ENCODE measurements at regions of chr16 and their contacts with region 1.

Region 1: GRCh38 chr16:11797166-11797956 is at the start of gene ZC3H7A:
- DNase-seq: peak; percentile 91 to 97 (median 95)
- ATAC-seq: peak; percentile 95
- H3K4me3 ChIP-seq: peak within 1 kb of the TSS; percentile 82
- H3K4me3 Mint-ChIP-seq: peak within 1 kb of the TSS; percentile 90 to 97 (median 94)
- H3K27ac ChIP-seq: peak within 1 kb of the TSS; percentile 97
- H3K27ac Mint-ChIP-seq: peak within 1 kb of the TSS; percentile 93 to 99 (median 98)
- H3K4me1 ChIP-seq: peaks cover 41 to 63% of the 10 kb centered on the region in 2 donors
- H3K4me1 Mint-ChIP-seq: peaks cover 55 to 84% (median 78%) of the 10 kb centered on the region in 7 donors
- H3K27me3 ChIP-seq: no peaks in the 10 kb centered on the region
- H3K27me3 Mint-ChIP-seq: no peaks in the 10 kb centered on the region
- total RNA-seq, gene ZC3H7A: 86.9 to 102 (median 88.6) TPM

Region 2: GRCh38 chr16:11345040-11345862 is 452.1 kb before region 1 on chr16 and contains the start of gene RMI2:
- CTCF ChIA-PET with region 1: no interaction called
- POLR2A ChIA-PET with region 1: no interaction called
- intact Hi-C with region 1: loop called in 1 of 2 experiments (anchors 5 kb)
- DNase-seq: peak; percentile 90 to 98 (median 95)
- ATAC-seq: peak; percentile 99
- H3K4me3 ChIP-seq: peak within 1 kb of the TSS; percentile 44
- H3K4me3 Mint-ChIP-seq: peak within 1 kb of the TSS; percentile 79 to 98 (median 92)
- H3K27ac ChIP-seq: peak within 1 kb of the TSS; percentile 65
- H3K27ac Mint-ChIP-seq: peak within 1 kb of the TSS; percentile 58 to 99 (median 83)
- H3K4me1 ChIP-seq: no peaks in the 10 kb centered on the region
- H3K4me1 Mint-ChIP-seq: peaks cover 10 to 49% (median 24%) of the 10 kb centered on the region in 7 donors
- H3K27me3 ChIP-seq: no peaks in the 10 kb centered on the region
- H3K27me3 Mint-ChIP-seq: no peaks in the 10 kb centered on the region
- total RNA-seq, gene RMI2: 1.8 to 57.0 (median 3.3) TPM

Region 3: GRCh38 chr16:11667824-11668622 is 129.3 kb before region 1 on chr16 and contains the start of gene SNN:
- CTCF ChIA-PET with region 1: no interaction called
- POLR2A ChIA-PET with region 1: interaction called, 4 read pairs
- intact Hi-C with region 1: loop called (anchors 2 to 5 kb)
- DNase-seq: peak; percentile 76 to 91 (median 83)
- ATAC-seq: peak; percentile 89
- H3K4me3 ChIP-seq: peak within 1 kb of the TSS; percentile 77
- H3K4me3 Mint-ChIP-seq: peak within 1 kb of the TSS; percentile 88 to 96 (median 91)
- H3K27ac ChIP-seq: peak within 1 kb of the TSS; percentile 85
- H3K27ac Mint-ChIP-seq: peak within 1 kb of the TSS; percentile 85 to 98 (median 96)
- H3K4me1 ChIP-seq: peaks cover 36 to 80% of the 10 kb centered on the region in 2 donors
- H3K4me1 Mint-ChIP-seq: peaks cover 53 to 87% (median 71%) of the 10 kb centered on the region in 7 donors
- H3K27me3 ChIP-seq: no peaks in the 10 kb centered on the region
- H3K27me3 Mint-ChIP-seq: no peaks in the 10 kb centered on the region
- total RNA-seq, gene SNN: 17.0 to 86.8 (median 34.4) TPM

Region 4: DNA sequence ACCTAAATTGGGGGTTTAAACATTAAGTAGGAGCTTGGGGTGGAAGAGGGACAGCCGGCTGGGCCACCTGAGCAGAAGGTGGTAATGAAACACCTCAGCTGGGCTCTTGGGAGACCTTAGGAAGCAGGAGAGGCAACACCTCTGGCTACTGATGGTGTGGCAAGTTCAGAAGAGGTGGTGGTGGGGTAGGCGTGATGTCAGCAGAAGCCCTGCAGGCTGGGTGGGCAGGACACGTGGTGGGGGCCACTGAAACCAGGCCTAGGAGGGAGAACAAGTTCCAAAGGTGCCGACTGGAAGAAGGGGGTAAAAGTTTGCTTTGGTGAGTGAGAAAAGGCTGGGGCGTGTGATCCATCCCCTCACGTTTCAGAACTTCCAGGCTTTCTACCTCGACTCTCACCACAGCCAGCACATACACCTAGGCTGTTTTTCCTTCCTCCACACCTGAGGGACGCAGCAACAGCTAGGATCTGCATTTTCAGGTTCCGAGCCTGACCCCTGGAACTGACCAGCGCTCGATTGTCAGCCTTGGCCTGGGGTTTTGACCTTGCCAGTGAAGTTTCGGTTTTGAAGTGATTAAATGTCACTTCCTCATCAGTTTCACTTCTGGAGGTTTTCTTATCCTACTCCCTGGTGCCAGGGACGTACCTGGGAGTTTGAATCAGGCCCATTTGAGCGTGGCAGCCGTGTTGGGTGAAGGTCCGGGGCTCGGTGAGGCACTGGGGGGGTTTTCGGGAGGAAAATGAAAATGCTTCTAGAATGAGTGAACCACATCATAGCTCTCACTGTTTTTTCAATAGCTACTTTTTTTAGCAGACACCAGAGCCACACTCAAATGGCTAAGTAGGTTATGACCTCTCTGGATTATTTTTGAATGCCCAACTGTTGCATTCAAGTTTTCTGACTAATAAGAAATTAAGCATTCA is 119.1 kb before region 1 on chr16:
- CTCF ChIA-PET with region 1: no interaction called
- POLR2A ChIA-PET with region 1: no interaction called
- intact Hi-C with region 1: no loop called
- DNase-seq: no peak
- ATAC-seq: no peak
- H3K4me3 ChIP-seq: no peak overlapping the region
- H3K4me3 Mint-ChIP-seq: peak overlapping the region in 3 of 10 donors; percentile 5 to 72 (median 31)
- H3K27ac ChIP-seq: no peak overlapping the region
- H3K27ac Mint-ChIP-seq: peak overlapping the region; percentile 20 to 88 (median 72)
- H3K4me1 ChIP-seq: peaks cover 11 to 30% of the 10 kb centered on the region in 2 donors
- H3K4me1 Mint-ChIP-seq: peaks cover 51 to 80% (median 77%) of the 10 kb centered on the region in 7 donors
- H3K27me3 ChIP-seq: no peaks in the 10 kb centered on the region
- H3K27me3 Mint-ChIP-seq: no peaks in the 10 kb centered on the region

Region 5: GRCh38 chr16:11768849-11769248 is 28.5 kb before region 1 on chr16:
- CTCF ChIA-PET with region 1: interaction called, 4 read pairs
- POLR2A ChIA-PET with region 1: interaction called, 17 read pairs
- intact Hi-C with region 1: loop called in 1 of 2 experiments (anchors 5 kb)
- DNase-seq: no peak
- ATAC-seq: no peak
- H3K4me3 ChIP-seq: no peak overlapping the region
- H3K4me3 Mint-ChIP-seq: peak overlapping the region in 9 of 10 donors; percentile 6 to 43 (median 36)
- H3K27ac ChIP-seq: peak overlapping the region; percentile 22
- H3K27ac Mint-ChIP-seq: peak overlapping the region; percentile 15 to 81 (median 70)
- H3K4me1 ChIP-seq: peaks cover 0 to 10% of the 10 kb centered on the region in 2 donors
- H3K4me1 Mint-ChIP-seq: peaks cover 8 to 23% (median 12%) of the 10 kb centered on the region in 7 donors
- H3K27me3 ChIP-seq: no peaks in the 10 kb centered on the region
- H3K27me3 Mint-ChIP-seq: no peaks in the 10 kb centered on the region

Region 6: DNA sequence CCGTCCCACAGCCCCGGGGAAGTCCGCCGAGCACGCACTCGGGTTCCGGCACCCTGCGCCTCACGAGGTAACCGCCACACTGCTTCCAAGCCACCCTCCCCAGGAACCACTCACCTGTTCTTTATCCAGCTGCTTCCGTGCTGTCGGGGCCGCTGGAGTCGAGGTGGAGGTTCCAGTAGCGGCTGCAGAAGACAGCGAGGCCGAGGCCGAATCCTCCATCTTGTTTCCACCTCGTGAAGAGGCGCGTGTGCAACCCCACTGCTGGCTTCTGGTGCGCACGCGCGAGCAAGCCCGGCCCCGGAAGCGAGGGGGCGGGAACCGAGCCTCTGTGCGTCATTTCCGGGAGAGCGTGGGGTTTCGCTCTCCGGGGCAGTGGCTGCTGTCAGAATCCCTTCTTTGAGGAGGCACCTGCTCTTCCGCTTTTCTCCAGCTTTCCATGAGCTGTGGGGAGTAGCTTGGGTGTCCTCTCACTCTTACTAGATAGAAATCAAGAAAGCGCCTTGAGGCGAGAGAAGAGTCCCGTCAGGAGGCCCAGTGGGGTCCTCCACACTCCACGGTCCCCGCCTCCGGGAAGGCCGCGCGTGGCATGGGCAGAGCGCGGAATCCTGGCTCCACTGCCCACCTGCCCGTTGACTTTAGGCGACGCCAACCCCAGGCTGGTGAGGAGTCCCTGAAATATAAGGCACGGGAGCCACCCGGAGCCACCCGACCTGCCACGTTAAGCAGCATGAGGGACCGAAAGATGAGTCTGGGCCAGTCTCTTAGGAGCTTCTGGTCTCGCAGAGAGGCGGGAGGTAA is 54.1 kb after region 1 on chr16 and contains the start of gene RSL1D1:
- CTCF ChIA-PET with region 1: no interaction called
- POLR2A ChIA-PET with region 1: interaction called, 3 read pairs
- intact Hi-C with region 1: loop called (anchors 1 kb)
- DNase-seq: peak; percentile 90 to 99 (median 96)
- ATAC-seq: peak; percentile 92
- H3K4me3 ChIP-seq: peak within 1 kb of the TSS; percentile 95
- H3K4me3 Mint-ChIP-seq: peak within 1 kb of the TSS; percentile 94 to 99 (median 99)
- H3K27ac ChIP-seq: peak within 1 kb of the TSS; percentile 89
- H3K27ac Mint-ChIP-seq: peak within 1 kb of the TSS; percentile 91 to 98 (median 97)
- H3K4me1 ChIP-seq: peaks cover 29% of the 10 kb centered on the region in 2 donors
- H3K4me1 Mint-ChIP-seq: peaks cover 32 to 72% (median 63%) of the 10 kb centered on the region in 7 donors
- H3K27me3 ChIP-seq: no peaks in the 10 kb centered on the region
- H3K27me3 Mint-ChIP-seq: no peaks in the 10 kb centered on the region
- total RNA-seq, gene RSL1D1: 141 to 255 (median 219) TPM

Measured in naive thymus-derived CD4-positive, alpha-beta T cell (primary cell).